ENCODE measurements at regions of chr10 and their contacts with region 1.

Region 1: DNA sequence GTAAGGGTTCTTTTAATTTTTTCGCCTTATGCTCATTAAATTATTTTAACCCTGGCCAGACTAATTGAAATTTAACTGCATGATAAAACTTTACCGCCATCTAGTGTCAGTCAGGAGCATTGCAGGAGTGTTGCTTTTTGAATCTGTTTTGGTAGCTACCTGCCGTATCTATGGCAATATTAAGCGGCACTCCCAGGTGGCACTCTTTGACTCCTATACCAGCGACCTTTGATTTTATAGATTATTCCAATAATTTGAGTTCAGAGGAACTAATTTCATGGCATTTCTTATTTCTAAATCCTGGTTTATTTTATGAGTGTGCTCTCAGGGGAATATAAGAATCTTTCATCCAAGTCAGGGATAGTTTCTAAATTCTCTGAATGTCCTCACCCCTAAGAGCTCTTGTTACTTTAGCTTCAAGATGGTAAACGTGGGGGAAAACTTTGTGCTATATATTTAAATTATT is 198.9 kb downstream of the REEP3 start:
- DNase-seq: peak; percentile 52
- H3K4me3 ChIP-seq: no peak overlapping the region
- H3K27ac ChIP-seq: peak overlapping the region; percentile 36
- H3K4me1 ChIP-seq: peaks cover 22% of the 10 kb centered on the region
- H3K27me3 ChIP-seq: no peaks in the 10 kb centered on the region
- CTCF ChIP-seq: peak; percentile 93 to 98

Region 2: GRCh38 chr10:63217120-63217605 is 502.9 kb before region 1 on chr10:
- CTCF ChIA-PET with region 1: no interaction called
- dilution Hi-C with region 1: no loop called
- in situ Hi-C with region 1: loop called in 1 of 2 experiments (anchors 25 kb)
- intact Hi-C with region 1: loop called (anchors 2 kb)
- DNase-seq: peak; percentile 27
- H3K4me3 ChIP-seq: no peak overlapping the region
- H3K27ac ChIP-seq: no peak overlapping the region
- H3K4me1 ChIP-seq: no peaks in the 10 kb centered on the region
- H3K27me3 ChIP-seq: no peaks in the 10 kb centered on the region
- CTCF ChIP-seq: peak; percentile 59 to 64

Region 3: DNA sequence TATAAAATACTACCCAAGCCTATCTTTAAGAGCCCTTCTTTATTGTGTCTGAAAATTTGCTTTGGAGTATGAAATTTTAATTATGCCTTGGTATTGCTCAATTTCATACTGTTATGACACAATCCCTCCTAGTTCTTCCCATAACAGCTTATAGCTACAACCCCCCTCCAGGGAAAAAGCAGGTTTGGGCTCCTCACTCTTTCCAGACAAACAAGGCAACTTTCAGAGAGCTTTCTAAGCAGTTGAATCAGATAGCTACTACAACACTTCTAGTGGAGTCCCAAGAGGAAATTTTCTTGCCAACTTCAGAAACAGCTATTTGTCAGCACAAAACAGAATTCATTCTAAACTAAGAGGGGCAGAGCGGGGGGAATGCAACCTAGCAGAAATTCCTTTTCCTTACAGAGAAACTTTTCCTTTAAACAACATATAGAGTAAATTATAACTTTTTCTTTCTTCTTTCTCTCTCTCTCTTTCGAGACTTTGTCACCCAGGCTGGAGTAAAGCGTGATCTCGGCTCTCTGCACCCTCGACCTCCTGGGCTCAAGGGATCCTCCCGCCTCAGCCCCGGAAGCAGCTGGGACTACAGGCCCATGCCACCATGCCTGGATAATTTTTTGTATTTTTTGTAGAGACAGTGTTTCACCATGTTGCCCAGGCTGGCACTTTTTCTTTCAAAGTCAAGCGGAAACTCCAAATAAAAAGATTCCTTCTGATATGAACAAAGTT is 228.4 kb before region 1 on chr10:
- CTCF ChIA-PET with region 1: no interaction called
- dilution Hi-C with region 1: loop called (anchors 25 kb)
- in situ Hi-C with region 1: no loop called
- intact Hi-C with region 1: no loop called
- DNase-seq: peak; percentile 81
- H3K4me3 ChIP-seq: peak overlapping the region; percentile 13 to 27 (median 19)
- H3K27ac ChIP-seq: peak overlapping the region; percentile 83
- H3K4me1 ChIP-seq: peaks cover 24% of the 10 kb centered on the region
- H3K27me3 ChIP-seq: no peaks in the 10 kb centered on the region
- CTCF ChIP-seq: no peak

Region 4: DNA sequence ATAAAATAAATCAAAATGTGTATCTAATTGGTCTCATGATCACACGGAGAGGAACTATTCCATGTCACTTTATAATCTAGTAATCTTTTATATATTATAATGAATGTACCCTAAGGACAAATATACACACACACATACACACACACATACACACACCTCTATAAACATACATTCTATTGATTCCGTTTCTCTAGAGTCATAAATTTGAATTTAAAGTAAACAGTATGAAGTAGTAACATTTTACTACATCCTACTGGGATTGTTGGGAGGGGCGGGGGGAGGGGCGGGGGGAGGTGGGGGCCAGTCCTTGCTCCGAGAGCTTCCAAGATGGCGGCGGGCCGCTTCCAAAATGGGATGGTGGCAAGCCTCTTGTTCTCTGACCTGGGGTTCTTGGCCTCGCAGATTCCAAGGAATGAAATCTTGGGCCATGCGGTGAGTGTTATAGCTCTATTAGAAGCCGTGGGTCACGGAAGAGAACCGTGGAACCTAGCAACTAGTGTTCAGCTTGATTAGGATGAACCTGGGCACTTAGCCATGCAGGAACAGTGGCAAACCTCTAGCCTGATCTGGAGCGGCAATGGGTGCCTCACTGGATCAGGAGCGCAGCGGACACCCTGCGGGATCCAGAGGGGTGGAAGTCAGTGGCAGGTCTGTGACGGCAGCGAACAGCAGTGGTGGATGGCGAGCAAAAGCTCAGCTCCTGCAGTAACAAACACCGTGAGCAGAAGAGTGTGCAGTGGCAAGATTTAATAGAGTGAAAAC is 55.6 kb before region 1 on chr10:
- CTCF ChIA-PET with region 1: no interaction called
- dilution Hi-C with region 1: loop called (anchors 5 kb)
- in situ Hi-C with region 1: no loop called
- intact Hi-C with region 1: no loop called
- DNase-seq: no peak
- H3K4me3 ChIP-seq: no peak overlapping the region
- H3K27ac ChIP-seq: no peak overlapping the region
- H3K4me1 ChIP-seq: no peaks in the 10 kb centered on the region
- H3K27me3 ChIP-seq: no peaks in the 10 kb centered on the region
- CTCF ChIP-seq: no peak

Region 5: DNA sequence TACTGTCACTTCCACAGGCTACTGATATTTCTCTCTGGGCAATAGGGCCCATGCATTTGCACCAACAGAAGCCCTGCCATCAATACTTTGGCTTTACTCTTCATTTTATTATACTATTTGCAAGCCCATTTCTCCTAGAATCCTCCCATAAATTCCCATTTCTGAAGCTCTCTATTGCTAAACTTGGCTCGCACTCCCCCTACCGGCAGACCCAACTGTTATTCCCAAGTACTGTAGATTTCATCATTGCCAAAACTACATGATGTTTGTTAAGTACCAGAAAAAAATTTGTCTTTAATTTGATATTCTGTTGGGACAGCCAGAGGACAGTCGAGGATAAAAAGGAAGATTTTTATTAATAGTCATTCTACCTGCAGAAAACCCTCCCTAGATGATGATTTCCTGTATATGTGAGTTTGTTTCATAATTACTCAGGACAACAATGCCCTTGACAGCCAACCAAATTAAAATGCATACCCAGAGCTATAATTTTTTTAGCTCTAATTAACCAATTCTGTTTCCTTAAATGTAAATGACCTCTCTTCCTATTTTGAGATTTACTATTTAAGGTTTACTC is 99.7 kb after region 1 on chr10:
- CTCF ChIA-PET with region 1: interaction called, 10 read pairs
- dilution Hi-C with region 1: no loop called
- in situ Hi-C with region 1: no loop called
- intact Hi-C with region 1: loop called (anchors 1 kb)
- DNase-seq: peak; percentile 36
- H3K4me3 ChIP-seq: no peak overlapping the region
- H3K27ac ChIP-seq: no peak overlapping the region
- H3K4me1 ChIP-seq: no peaks in the 10 kb centered on the region
- H3K27me3 ChIP-seq: peaks cover 3% of the 10 kb centered on the region
- CTCF ChIP-seq: peak; percentile 87 to 93